ENCODE measurements at regions of chr7 and their contacts with region 1.

Region 1: GRCh38 chr7:121558288-121558687 is 162.2 kb upstream of the FAM3C start:
- DNase-seq: no peak
- H3K4me3 ChIP-seq: no peak overlapping the region
- H3K27ac ChIP-seq: no peak overlapping the region
- H3K4me1 ChIP-seq: no peaks in the 10 kb centered on the region; a peak in 1 of 7 replicates
- H3K27me3 ChIP-seq: no peaks in the 10 kb centered on the region
- CTCF ChIP-seq: peak in 2 of 3 experiments; percentile 14 to 48; a peak in 2 of 4 replicates
- EP300 ChIP-seq: no peak
- POLR2A ChIP-seq: no peak
- RAD21 ChIP-seq: peak; percentile 22 to 40; a peak in 3 of 4 replicates

Region 2: GRCh38 chr7:121466455-121466854 is 91.8 kb before region 1 on chr7:
- CTCF ChIA-PET with region 1: no interaction called
- POLR2A ChIA-PET with region 1: no interaction called
- DNase-seq: no peak
- H3K4me3 ChIP-seq: no peak overlapping the region
- H3K27ac ChIP-seq: no peak overlapping the region
- H3K4me1 ChIP-seq: peaks cover 0 to 4% (median 0%) of the 10 kb centered on the region in 4 experiments; a peak in 1 of 7 replicates
- H3K27me3 ChIP-seq: no peaks in the 10 kb centered on the region
- CTCF ChIP-seq: no peak
- EP300 ChIP-seq: no peak
- POLR2A ChIP-seq: no peak
- RAD21 ChIP-seq: no peak

Region 3: DNA sequence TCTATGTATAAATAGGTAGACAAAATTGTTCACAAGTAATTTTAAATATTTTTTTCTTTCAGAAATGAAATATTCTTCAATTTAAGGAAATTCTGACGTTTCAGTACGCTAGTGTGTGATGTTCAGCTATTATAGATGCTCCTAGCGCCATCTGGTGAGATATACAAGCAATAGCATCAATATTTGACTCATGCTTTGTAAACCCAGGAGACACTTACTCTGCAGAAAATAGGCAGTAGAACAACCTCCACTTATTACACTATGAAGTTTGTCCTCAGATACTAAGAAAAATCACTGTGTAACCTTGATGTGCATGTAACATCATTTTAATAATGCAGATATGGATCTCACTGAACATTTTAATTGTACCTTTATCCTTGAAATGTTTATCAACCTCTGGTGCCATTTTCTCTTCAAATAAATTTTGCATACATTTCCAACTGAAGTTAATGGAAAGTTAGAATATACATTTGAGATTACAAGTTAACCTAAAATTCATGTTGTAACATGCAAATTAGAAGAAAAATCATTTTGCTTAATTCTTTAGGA is 10.7 kb before region 1 on chr7:
- CTCF ChIA-PET with region 1: interaction called, 18 read pairs
- POLR2A ChIA-PET with region 1: no interaction called
- DNase-seq: no peak
- H3K4me3 ChIP-seq: no peak overlapping the region
- H3K27ac ChIP-seq: no peak overlapping the region
- H3K4me1 ChIP-seq: no peaks in the 10 kb centered on the region
- H3K27me3 ChIP-seq: no peaks in the 10 kb centered on the region
- CTCF ChIP-seq: peak in 2 of 3 experiments; percentile 57 to 71; a peak in 3 of 4 replicates
- EP300 ChIP-seq: no peak
- POLR2A ChIP-seq: no peak
- RAD21 ChIP-seq: peak; percentile 88 to 92

Measured in H1 (cell line).